ENCODE measurements at regions of chr1 and their contacts with region 1.

Region 1: GRCh38 chr1:44775078-44775929 is at the start of gene RPS8:
- H3K4me3 ChIP-seq: peak within 1 kb of the TSS; percentile 63
- H3K27ac ChIP-seq: peak within 1 kb of the TSS; percentile 99
- H3K4me1 ChIP-seq: no peaks in the 10 kb centered on the region
- CTCF ChIP-seq: no peak

Region 2: GRCh38 chr1:44759077-44759476 is 16.2 kb before region 1 on chr1:
- CTCF ChIA-PET with region 1: no interaction called
- POLR2A ChIA-PET with region 1: interaction called, 17 read pairs
- H3K4me3 ChIP-seq: no peak overlapping the region
- H3K27ac ChIP-seq: no peak overlapping the region
- H3K4me1 ChIP-seq: no peaks in the 10 kb centered on the region
- CTCF ChIP-seq: no peak

Region 3: DNA sequence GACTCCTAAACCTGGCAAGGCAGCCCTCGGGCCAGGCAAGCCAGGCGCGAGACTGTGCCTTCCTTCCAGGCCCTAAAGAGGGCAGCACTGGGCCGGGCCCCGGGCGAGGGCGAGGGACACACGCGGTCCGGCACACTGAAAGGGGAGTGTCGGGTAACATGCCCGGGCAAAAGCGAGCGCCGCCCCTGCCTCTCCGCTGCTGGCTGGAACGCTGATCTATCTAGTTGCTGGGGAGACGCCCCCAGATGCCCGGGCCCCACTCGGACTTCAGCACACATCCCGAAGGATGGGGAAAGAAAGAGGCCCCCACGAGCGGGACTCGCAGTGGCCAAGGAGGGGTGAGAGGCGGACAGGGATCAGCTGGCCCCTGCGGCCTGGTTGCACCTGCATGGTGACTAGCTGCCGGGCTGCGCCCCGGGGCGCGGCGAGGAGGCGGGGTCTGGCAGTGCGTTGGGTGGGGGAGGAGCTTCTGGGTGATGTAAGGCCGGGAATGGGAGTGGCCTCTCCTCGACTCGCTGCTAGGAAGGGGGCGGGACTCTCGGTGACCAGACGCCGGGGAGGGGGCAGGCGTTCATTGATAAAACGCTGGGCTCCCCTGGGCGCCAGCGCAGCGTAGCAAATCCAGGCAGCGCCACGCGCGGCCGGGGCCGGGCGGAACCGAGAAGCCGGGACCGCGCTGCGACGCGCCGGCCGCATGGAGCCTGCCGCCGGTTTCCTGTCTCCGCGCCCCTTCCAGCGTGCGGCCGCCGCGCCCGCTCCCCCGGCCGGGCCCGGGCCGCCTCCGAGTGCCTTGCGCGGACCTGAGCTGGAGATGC is 24.7 kb after region 1 on chr1 and contains the start of gene PLK3:
- CTCF ChIA-PET with region 1: interaction called, 8 read pairs
- POLR2A ChIA-PET with region 1: interaction called, 29 read pairs
- H3K4me3 ChIP-seq: peak within 1 kb of the TSS; percentile 70
- H3K27ac ChIP-seq: peak within 1 kb of the TSS; percentile 80
- H3K4me1 ChIP-seq: no peaks in the 10 kb centered on the region
- CTCF ChIP-seq: peak; percentile 97

Region 4: DNA sequence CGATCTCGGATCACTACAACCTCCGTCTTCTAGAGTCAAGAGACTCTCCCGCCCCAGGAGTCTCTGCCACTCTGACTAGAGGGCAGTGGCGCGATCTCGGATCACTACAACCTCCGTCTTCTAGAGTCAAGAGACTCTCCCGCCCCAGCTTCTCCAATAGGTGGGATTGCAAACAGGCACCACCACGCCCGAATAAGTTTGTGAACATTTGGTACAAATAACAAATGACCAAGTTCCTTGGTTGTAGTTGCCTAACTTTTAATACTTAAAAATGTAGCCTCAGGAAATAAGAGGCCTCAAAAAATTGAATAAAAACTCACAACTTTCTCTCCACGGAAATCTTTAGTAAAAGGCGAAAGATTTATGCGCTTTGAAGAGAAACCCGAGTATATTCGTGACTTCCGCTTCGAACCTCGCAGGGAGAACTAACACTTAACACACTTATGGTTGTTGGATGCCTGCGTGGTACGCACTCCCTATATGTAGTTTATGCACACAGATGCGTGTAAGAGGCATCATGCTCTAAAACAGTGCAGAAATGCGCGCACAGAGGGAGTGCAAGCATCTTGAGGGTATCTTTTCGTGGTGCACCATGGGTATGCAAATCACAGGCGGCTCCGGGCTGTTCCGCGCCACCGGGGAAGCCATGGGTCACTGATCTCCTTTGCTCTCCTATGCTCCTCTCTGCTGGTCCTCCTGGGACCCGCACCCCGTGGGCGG is 44.5 kb after region 1 on chr1:
- CTCF ChIA-PET with region 1: no interaction called
- POLR2A ChIA-PET with region 1: interaction called, 19 read pairs
- H3K4me3 ChIP-seq: peak overlapping the region; percentile 31
- H3K27ac ChIP-seq: peak overlapping the region; percentile 91
- H3K4me1 ChIP-seq: no peaks in the 10 kb centered on the region
- CTCF ChIP-seq: no peak

Region 5: DNA sequence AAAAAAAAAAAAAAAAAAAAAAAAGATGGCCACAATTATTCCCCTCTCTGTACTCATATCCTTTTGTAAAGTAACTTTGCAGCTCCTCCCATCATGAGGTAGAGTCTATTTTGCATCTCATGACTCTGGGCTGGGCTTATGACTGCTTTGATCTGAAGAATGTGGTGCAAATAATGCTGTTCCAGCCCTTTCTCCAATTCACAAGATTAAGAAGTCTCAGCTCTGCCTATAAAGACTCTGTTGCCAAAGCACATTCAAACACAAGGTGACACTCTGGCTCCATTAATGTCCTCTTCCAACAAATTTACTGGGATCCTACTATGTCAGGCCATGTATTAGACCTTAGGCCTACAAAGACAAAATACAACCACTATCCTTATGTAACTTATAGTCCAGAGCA is 132.6 kb after region 1 on chr1:
- CTCF ChIA-PET with region 1: no interaction called
- POLR2A ChIA-PET with region 1: no interaction called
- H3K4me3 ChIP-seq: no peak overlapping the region
- H3K27ac ChIP-seq: no peak overlapping the region
- H3K4me1 ChIP-seq: no peaks in the 10 kb centered on the region
- CTCF ChIP-seq: peak; percentile 27; the same call in 1 of the 2 replicates

Measured in HEK293 (cell line).